Common myeloid progenitor, CD34-positive (primary cell): ENCODE measurements at regions of chr2 and their contacts with region 1.

Region 1: DNA sequence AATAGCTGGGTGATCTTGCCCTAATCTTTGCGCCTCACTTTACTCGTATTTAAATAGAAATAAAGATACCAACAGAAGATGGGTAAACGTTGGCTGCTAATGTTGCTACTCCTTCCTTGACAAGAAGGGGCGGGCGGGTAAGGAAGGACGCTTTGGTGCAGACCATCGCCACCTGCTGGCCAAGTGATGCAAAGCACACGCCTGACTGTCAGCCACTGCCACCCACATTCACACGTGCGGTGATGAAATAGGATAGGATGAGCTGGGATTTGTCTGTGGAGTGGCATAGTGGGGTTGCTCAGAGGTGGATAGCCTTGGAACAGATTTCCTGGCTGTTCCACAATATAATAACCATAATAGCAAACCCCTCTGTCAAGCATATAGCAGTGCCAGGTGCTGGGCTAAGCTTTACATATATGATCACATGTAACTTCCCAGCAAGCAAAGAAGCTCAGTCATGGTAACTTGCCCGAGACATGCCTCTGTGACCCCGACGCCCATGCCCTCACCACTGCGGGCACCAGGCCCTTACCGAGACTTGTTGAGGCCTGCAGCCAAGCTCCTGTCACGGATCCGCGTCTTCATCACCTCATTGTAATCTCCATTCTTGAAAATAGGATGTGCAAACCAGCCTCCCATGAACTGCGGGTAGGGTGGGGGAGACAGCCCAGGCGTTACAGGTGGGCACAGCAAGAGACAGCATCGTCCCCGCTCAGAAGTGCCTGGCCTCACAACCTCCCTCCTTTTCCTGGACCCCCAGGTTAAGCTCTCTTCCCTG is 39.3 kb downstream of the LCT start:
- DNase-seq: peak; percentile 72 to 85 (median 84)
- H3K4me3 ChIP-seq: no peak overlapping the region
- H3K27ac ChIP-seq: no peak overlapping the region
- H3K4me1 ChIP-seq: peaks cover 0 to 31% (median 26%) of the 10 kb centered on the region in 4 experiments
- H3K27me3 ChIP-seq: no peaks in the 10 kb centered on the region

Region 2: GRCh38 chr2:135785032-135785431 is 12.7 kb before region 1 on chr2:
- CTCF ChIA-PET with region 1: interaction called, 28 read pairs
- POLR2A ChIA-PET with region 1: no interaction called
- DNase-seq: peak; percentile 13 to 38 (median 30)
- H3K4me3 ChIP-seq: no peak overlapping the region
- H3K27ac ChIP-seq: no peak overlapping the region
- H3K4me1 ChIP-seq: no peaks in the 10 kb centered on the region
- H3K27me3 ChIP-seq: no peaks in the 10 kb centered on the region

Region 3: GRCh38 chr2:135818937-135819610 is 21.4 kb after region 1 on chr2:
- CTCF ChIA-PET with region 1: interaction called, 14 read pairs
- POLR2A ChIA-PET with region 1: no interaction called
- DNase-seq: peak in 2 of 3 donors; percentile 51 to 53
- H3K4me3 ChIP-seq: no peak overlapping the region
- H3K27ac ChIP-seq: no peak overlapping the region
- H3K4me1 ChIP-seq: peaks cover 7 to 22% (median 18%) of the 10 kb centered on the region in 4 experiments
- H3K27me3 ChIP-seq: no peaks in the 10 kb centered on the region

Region 4: DNA sequence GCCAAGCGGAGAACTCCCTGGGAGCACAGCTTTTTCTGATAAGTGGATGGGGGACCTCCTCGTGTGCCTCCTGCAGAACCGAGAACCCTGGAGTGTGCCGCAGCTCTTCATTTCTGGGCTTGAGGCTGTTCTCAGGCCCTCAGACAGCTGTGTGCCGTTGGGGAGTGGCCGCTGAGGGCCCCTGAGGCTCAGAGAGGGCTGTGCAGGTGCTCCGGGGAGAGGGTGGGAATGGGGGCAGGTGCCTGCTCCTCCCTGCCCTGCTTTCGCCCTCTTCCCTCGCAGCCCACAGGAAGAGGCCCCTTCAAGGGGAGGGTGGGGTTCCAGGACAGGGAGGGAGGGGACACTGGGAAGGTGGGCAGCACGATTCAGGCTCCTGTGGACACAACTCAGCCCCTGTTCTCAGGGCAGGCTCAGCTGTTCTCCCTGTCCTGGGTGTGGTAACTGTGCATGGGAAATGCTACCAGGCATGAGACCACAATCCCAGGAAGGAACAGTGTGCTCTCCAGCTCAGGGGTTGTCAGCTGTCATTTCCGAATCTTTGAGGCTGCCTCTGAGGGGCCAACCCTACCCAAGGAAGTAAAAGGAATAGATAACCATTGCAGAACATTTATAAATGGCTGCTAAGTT is 28.0 kb after region 1 on chr2:
- CTCF ChIA-PET with region 1: interaction called, 14 read pairs
- POLR2A ChIA-PET with region 1: no interaction called
- DNase-seq: no peak
- H3K4me3 ChIP-seq: peak overlapping the region in 2 of 7 experiments; percentile 8 to 45
- H3K27ac ChIP-seq: no peak overlapping the region
- H3K4me1 ChIP-seq: peaks cover 5 to 18% (median 12%) of the 10 kb centered on the region in 4 experiments
- H3K27me3 ChIP-seq: no peaks in the 10 kb centered on the region

Region 5: DNA sequence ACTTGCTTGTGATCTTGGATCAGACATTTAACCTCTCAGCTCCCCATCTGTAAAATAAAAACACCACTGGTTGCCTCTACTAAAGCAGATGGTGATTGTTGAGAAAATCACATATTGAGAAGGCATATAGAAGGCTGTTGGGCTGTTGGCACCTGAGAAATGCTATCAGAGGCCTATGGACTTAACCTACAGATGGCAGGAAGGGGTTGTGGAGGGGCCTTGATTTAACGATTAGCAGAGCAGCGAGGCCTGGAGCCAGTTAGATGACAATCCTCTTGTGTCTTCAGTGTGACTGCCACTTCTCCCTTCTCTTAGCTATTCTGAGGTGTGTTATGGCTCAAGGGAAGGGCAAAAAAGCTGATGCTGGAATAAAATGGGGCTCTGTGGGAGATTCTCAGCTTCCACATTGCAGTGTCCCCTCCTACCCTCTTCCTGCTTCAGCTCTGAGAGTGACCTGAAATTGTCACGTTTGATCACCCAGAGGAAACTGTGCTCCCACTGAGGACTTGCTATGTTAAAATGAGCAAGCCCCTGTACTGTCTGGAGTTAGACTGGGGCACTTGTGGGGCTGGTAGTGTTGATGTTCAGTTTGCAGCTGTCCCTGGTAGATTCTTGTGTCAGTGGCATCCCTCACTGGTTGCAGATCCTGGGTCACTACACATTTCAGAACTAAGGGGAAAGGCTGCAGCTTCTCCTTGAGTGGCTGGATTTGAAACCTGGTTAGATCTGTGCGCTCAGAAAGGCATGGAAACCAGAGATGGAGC is 288.7 kb after region 1 on chr2:
- CTCF ChIA-PET with region 1: no interaction called
- POLR2A ChIA-PET with region 1: no interaction called
- DNase-seq: no peak
- H3K4me3 ChIP-seq: no peak overlapping the region
- H3K27ac ChIP-seq: no peak overlapping the region
- H3K4me1 ChIP-seq: no peaks in the 10 kb centered on the region
- H3K27me3 ChIP-seq: no peaks in the 10 kb centered on the region